ENCODE measurements at regions of chr12 and their contacts with region 1.

Region 1: GRCh38 chr12:119667577-119668323 is at the start of gene PRKAB1:
- DNase-seq: peak; percentile 99
- ATAC-seq: peak; percentile 95
- H3K4me3 ChIP-seq: peak within 1 kb of the TSS; percentile 92
- H3K27ac ChIP-seq: peak within 1 kb of the TSS; percentile 82
- H3K4me1 ChIP-seq: peaks cover 22% of the 10 kb centered on the region
- H3K27me3 ChIP-seq: no peaks in the 10 kb centered on the region
- CTCF ChIP-seq: peak; percentile 97
- total RNA-seq, gene PRKAB1: 16.0 and 16.2 TPM in 2 replicates

Region 2: DNA sequence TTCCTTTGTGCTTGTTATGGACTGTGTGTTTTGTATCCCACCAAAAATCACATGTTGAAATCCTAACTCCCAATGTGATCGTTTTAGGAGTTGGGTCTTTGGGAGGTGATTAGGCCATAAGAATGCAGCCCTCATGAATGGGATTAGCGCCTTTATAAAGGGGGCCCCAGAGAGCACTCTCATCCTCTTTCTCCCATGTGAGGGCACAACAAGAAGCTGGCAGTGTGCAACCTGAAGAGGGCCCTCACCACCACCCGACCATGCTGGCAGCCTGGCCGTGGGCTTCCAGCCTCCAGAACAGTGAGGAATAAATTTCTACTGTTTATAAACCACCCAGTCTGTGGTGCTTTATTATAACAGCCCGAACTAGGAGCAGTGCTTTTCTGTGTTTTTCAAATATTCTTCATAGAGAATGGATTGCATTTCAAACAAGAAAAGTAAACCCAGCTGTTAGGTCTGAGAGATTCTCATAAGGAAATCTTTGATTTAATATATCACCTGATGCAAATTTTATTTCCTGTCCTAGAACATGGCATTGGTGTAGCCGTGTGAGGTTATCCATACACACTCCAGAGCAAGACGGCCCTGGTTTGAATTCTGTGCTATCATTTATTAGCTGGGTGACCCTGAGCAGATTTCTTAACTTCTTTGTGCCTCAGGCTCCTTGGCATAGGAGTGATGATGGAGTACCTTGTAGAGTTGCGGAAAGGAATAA is 461.2 kb before region 1 on chr12:
- CTCF ChIA-PET with region 1: no interaction called
- POLR2A ChIA-PET with region 1: interaction called, 30 read pairs
- intact Hi-C with region 1: no loop called
- DNase-seq: no peak
- ATAC-seq: no peak
- H3K4me3 ChIP-seq: no peak overlapping the region
- H3K27ac ChIP-seq: no peak overlapping the region
- H3K4me1 ChIP-seq: no peaks in the 10 kb centered on the region
- H3K27me3 ChIP-seq: peaks cover 7% of the 10 kb centered on the region; the same call in 1 of the 2 replicates
- CTCF ChIP-seq: no peak

Region 3: GRCh38 chr12:119692997-119693396 is 25.2 kb after region 1 on chr12:
- CTCF ChIA-PET with region 1: interaction called, 6 read pairs
- POLR2A ChIA-PET with region 1: no interaction called
- intact Hi-C with region 1: loop called (anchors 1 kb)
- DNase-seq: peak; percentile 98
- ATAC-seq: peak; percentile 97
- H3K4me3 ChIP-seq: no peak overlapping the region
- H3K27ac ChIP-seq: peak overlapping the region; percentile 75
- H3K4me1 ChIP-seq: peaks cover 19% of the 10 kb centered on the region
- H3K27me3 ChIP-seq: no peaks in the 10 kb centered on the region
- CTCF ChIP-seq: no peak

Region 4: DNA sequence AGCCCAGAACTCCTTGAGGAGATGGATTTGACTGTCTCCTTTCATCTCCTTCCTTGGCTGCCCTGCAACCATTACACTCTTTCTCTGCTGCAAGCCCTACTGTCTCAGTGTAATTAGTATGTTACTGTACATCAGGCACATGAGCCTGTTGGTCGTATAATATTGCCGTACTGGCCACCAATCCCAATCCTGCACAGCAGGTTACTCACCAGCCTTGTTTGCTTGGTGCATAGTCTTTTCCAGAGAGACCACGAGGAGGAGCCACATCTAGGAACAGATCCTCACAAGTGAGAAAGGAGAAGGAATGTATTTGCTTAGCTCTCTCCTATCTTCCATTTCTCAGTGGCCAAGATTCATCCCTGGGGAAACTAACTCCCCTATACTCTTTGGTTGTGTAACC is 288.3 kb after region 1 on chr12:
- CTCF ChIA-PET with region 1: no interaction called
- POLR2A ChIA-PET with region 1: no interaction called
- intact Hi-C with region 1: no loop called
- DNase-seq: peak; percentile 13
- ATAC-seq: no peak
- H3K4me3 ChIP-seq: no peak overlapping the region
- H3K27ac ChIP-seq: no peak overlapping the region
- H3K4me1 ChIP-seq: no peaks in the 10 kb centered on the region
- H3K27me3 ChIP-seq: no peaks in the 10 kb centered on the region
- CTCF ChIP-seq: peak; percentile 36